ENCODE measurements at regions of chr15 and their contacts with region 1.

Region 1: DNA sequence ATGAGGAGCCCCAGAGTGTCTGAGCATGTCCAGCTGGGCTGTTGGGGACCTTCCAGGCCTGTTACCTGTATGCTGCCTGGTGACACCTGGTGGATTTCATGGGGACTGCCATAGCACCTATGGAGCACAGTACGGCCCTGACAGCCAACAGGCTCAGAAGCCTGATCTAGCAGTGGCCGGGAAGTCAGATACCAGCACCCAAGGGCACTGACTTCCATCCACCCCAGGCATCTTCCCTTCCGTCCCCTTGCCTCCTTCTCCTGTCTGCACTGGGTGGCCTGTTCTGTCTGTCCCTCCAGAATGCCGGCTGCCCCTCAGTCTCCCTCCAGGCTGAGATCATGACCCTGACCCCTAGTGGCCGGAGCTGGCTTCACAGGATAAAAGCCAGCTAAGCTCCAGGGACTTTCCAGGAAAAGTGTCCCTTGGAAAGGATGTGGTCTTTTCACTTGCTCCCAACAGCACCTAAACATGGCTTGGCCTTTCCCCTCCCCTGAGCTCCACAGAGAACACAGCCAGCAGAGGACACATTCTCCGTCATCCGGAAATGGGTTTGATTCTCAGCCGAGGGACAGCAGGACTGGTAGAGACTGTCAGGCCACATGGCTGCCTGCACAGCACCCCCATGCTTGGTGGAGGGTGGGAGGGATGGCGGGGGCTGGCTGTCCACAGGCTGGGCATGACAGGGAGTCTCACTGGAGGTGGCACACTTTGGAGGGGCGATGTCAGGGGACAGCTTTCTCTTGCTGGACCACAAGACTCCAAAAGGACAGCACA is 9.5 kb downstream of the RPS17 start:
- DNase-seq: peak; percentile 71
- CTCF ChIP-seq: peak; percentile 83

Region 2: GRCh38 chr15:82298520-82298919 is 232.3 kb before region 1 on chr15:
- in situ Hi-C with region 1: no loop called
- DNase-seq: no peak
- CTCF ChIP-seq: no peak

Region 3: DNA sequence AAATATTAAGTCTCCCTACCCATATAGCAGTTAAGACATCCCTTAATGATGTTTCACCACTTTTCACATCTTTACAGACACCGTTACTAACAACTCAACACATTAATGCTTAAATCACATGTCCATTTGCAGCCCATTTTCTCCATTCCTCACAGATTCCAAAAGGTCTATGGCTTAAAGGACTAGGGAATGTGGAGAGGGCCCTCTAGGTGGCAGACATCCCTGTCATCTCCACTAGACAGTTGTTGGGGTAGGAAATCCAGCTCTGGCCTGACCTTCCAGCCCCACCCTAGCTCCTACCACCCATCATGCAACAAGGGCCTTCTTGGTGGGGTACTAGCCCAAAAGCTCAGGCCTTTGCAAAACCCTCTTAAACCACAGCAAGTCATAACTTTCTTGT is 91.2 kb after region 1 on chr15:
- in situ Hi-C with region 1: no loop called
- DNase-seq: no peak
- CTCF ChIP-seq: no peak

Region 4: DNA sequence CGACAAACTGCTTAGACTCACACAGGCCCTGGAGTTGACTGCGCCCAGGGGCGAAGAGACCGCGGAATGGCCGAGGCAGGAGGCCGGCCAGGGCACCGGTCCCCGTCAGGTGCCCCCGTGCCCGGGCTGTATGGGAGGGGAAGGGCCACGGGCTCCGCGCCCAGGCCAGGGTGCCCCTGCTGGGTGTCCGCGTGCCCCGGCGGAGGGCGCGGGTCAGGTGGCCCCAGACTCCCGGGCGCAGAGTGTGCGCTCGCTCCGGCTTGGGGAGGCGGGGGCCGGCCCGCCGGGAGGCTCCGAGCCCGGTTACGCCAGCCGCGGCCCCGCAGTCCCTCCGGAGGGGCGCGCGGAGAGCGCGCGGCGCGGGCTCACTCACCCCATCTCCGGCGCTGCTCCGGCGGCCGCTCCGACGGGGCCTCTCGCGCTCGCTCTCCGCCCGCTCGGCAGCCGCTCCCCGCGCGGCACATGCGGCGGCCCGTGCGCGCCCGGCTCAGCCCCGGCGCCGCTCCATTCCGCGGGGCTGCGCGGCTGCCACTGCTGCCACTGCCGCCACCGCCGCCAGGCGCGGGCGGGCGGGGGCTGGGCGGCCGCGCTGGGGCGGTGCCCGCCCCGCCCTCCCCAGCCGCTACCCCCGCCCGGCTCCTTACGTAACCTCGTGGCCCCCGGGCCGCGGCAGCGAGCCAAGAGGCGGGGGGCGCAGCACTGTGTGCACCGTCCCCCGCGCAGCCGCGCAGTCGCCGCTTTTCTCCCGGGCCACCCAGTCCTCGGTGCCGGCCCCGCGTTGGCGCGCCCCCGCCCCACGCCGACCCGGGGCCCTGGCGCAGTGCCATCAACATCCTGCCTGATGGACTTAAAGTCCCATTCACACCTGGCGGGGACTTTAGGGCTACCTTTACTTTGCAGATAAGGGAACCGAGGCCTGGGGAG is 421.6 kb after region 1 on chr15 and contains the start of gene HOMER2:
- in situ Hi-C with region 1: no loop called
- DNase-seq: peak; percentile 52
- CTCF ChIP-seq: no peak

Region 5: DNA sequence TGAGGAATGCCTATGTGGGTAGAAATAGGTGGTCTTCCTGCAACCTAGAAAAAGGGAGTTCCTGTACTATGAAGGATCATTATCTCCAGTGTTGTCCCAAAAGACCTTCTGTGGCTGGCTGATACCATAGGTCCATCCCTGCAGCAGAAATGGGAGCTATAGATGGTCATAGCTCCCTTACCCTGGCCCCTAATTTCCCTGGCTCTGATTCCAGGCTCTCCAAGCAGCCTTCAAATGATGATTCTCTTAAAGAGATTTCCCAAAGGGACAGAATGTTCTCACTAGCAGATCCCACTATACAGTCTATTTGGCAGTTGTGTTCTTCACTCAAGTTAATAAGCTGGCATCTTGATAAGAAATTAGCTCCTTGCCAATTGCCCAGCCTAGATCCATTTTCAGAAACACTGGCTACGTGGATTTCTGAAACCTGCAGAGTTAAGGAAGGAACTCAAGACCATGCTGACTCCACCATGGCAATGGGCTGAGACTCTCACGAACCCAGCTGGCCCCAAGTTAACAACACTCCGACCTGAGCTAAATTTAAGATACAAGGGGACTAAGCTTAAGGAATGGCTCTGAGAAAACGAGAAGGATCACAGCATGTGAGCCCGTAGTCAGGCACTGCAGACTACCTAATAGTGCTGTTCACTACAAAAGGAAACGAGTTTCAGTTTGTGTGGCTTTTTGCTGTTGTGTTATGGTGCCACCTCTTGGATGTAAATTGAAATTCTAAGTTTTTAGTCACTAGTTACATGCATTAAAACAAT is 469.3 kb after region 1 on chr15:
- in situ Hi-C with region 1: loop called (anchors 10 kb)
- DNase-seq: peak; percentile 77
- CTCF ChIP-seq: peak; percentile 51